Prostate gland (tissue), 2 donors: ENCODE measurements at regions of chrX and their contacts with region 1.

Region 1: GRCh38 chrX:115226929-115227328 is 7.0 kb downstream of the LRCH2 start:
- DNase-seq: no peak
- H3K4me3 ChIP-seq: no peak overlapping the region
- H3K27ac ChIP-seq: no peak overlapping the region
- H3K4me1 ChIP-seq: no peaks in the 10 kb centered on the region
- H3K27me3 ChIP-seq: no peaks in the 10 kb centered on the region
- CTCF ChIP-seq: peak in 2 of 4 experiments; percentile 22 to 43
- POLR2A ChIP-seq: no peak

Region 2: DNA sequence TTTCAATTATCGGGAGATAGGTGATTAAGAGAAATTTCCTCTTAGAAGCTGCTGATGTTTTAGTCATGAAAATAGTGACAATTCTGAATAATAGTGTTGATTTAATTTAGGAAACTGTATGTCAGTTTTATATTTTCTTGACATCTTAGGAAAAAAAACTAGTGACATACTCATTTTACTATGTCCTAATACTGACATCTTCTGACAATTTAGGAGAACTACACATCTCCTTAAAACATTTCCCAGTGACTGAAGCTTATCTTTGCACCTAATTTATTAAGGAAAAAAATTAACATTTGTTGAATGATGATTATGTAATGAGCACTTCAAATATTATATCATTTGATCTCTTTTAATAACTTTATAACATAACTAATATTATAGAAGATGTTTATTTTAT is 79.7 kb before region 1 on chrX:
- intact Hi-C with region 1: no loop called
- DNase-seq: no peak
- H3K4me3 ChIP-seq: no peak overlapping the region
- H3K27ac ChIP-seq: no peak overlapping the region
- H3K4me1 ChIP-seq: no peaks in the 10 kb centered on the region
- H3K27me3 ChIP-seq: no peaks in the 10 kb centered on the region
- CTCF ChIP-seq: peak in 3 of 4 experiments; percentile 18 to 44 (median 40)
- POLR2A ChIP-seq: no peak

Region 3: DNA sequence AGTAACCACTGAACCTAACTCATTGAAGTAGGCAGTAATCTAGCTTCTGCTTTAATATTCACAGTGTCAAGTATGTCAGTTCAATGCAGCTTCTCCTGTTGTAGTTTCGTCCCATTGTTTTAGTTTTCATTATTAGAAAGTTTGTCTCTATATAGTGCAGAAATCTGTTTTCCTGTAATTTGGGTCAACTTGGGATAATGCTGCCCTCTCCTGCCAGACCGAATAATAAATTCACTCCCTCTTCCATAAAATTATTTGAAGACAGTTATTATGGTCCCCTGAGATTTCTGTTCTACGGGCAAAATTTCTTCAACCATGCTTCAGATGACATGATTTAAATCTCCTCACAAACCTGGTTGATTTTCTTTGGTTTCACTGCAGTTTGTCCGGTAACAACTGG is 57.9 kb after region 1 on chrX:
- intact Hi-C with region 1: loop called (anchors 5 kb)
- DNase-seq: no peak
- H3K4me3 ChIP-seq: no peak overlapping the region
- H3K27ac ChIP-seq: no peak overlapping the region
- H3K4me1 ChIP-seq: no peaks in the 10 kb centered on the region
- H3K27me3 ChIP-seq: no peaks in the 10 kb centered on the region
- CTCF ChIP-seq: peak in 1 of 4 experiments; percentile 20
- POLR2A ChIP-seq: no peak

Region 4: DNA sequence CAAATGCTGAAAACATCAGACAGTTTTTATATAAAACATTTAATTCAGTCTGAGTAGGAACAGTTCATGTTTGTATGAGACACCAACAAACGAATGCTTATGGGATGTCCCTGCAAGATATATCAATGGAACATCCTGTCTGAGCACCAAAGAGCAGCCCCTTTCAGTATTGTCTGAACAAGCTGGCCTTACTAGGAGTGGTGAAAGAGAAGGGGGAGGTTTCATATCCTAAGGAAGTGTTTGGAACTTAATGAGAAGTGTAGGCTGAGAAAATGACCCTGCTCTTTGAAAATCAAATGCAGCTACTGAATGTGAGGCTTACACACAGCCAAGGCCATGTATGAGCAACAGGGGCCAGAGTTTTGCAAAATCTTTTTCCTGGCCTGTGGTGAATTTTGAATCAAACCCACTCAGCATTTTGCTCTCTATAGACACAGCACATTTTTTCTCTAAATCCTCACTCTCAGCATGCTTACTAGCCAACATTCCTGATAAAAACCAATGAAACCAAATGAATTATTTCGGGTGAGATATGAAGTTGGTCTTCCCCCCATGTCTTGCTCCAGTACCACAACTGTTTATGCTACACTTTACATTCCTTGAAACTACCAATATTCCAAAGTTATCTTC is 182.0 kb after region 1 on chrX:
- intact Hi-C with region 1: no loop called
- DNase-seq: no peak
- H3K4me3 ChIP-seq: no peak overlapping the region
- H3K27ac ChIP-seq: no peak overlapping the region
- H3K4me1 ChIP-seq: no peaks in the 10 kb centered on the region
- H3K27me3 ChIP-seq: no peaks in the 10 kb centered on the region
- CTCF ChIP-seq: no peak
- POLR2A ChIP-seq: no peak